Activated naive CD4-positive, alpha-beta T cell treated with anti-CD3 and anti-CD28 coated beads for 36 hours (primary cell): ENCODE measurements at regions of chr4 and their contacts with region 1.

Region 1: GRCh38 chr4:80989921-80990544 is 40.5 kb upstream of the BMP3 start:
- DNase-seq: peak; percentile 14
- H3K4me3 Mint-ChIP-seq: no peak overlapping the region
- H3K27ac Mint-ChIP-seq: no peak overlapping the region
- H3K4me1 Mint-ChIP-seq: peaks cover 2% of the 10 kb centered on the region
- H3K27me3 Mint-ChIP-seq: no peaks in the 10 kb centered on the region

Region 2: DNA sequence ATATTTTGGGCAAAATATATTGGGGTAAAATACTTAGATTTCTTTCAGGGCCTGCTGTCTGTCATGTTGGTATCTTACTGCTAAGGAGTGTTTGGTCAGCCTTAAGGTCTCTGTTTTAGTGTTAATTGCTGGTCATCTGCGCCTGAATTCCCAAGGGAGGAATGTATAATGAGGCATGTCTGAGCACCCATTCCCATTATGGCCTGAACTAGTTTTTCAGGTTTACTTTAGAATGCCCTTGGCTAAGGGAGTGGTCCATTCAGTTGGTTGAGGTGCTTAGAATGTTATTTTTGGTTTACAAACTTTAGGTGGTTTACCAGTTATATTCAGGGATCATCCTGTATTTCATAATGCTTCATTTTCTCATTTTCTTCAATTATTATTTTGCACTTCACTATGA is 528.6 kb before region 1 on chr4:
- CTCF ChIA-PET with region 1: no interaction called
- intact Hi-C with region 1: loop called (anchors 2 kb)
- DNase-seq: no peak
- H3K4me3 Mint-ChIP-seq: no peak overlapping the region
- H3K27ac Mint-ChIP-seq: no peak overlapping the region
- H3K4me1 Mint-ChIP-seq: peaks cover 21% of the 10 kb centered on the region
- H3K27me3 Mint-ChIP-seq: no peaks in the 10 kb centered on the region

Region 3: GRCh38 chr4:80619070-80619674 is 370.9 kb before region 1 on chr4:
- CTCF ChIA-PET with region 1: no interaction called
- intact Hi-C with region 1: loop called (anchors 2 kb)
- DNase-seq: peak; percentile 9
- H3K4me3 Mint-ChIP-seq: no peak overlapping the region
- H3K27ac Mint-ChIP-seq: no peak overlapping the region
- H3K4me1 Mint-ChIP-seq: no peaks in the 10 kb centered on the region
- H3K27me3 Mint-ChIP-seq: no peaks in the 10 kb centered on the region

Region 4: DNA sequence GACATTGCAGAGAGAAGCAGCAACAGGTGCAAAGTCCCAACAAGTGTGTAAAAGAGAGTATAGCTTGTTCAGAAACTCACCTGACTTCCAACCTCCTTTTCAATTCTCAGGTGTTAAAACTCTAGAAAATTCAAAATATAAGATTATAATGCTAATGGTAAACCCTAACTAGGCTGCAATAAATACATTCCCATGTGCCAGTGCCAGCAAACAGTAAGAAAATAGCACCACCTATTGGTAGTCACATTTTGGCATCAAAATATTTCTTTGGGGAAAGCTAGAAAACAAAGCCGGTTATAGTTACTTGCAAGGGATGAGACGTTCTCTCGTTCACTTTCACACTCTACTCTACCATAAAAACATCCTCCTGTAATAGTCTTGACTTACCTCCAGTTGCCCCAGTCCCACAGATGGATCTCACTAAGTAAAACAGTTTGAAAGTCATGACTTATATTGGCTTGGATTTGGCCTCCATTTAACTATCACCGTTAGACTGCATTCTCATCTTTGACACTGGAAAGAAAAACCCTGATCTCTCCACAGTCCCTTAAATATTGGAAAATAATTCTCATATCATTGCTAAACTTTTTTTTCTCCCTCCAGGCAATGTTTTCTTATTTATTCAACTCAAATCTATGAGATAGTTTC is 50.1 kb after region 1 on chr4:
- CTCF ChIA-PET with region 1: interaction called, 8 read pairs
- intact Hi-C with region 1: loop called (anchors 2 kb)
- DNase-seq: no peak
- H3K4me3 Mint-ChIP-seq: no peak overlapping the region
- H3K27ac Mint-ChIP-seq: no peak overlapping the region
- H3K4me1 Mint-ChIP-seq: no peaks in the 10 kb centered on the region
- H3K27me3 Mint-ChIP-seq: no peaks in the 10 kb centered on the region

Region 5: GRCh38 chr4:81260443-81261101 is 270.5 kb after region 1 on chr4:
- CTCF ChIA-PET with region 1: no interaction called
- intact Hi-C with region 1: no loop called
- DNase-seq: no peak
- H3K4me3 Mint-ChIP-seq: no peak overlapping the region
- H3K27ac Mint-ChIP-seq: no peak overlapping the region
- H3K4me1 Mint-ChIP-seq: no peaks in the 10 kb centered on the region
- H3K27me3 Mint-ChIP-seq: peaks cover 4% of the 10 kb centered on the region